Breast epithelium (tissue), 4 donors: ENCODE measurements at regions of chr18 and their contacts with region 1.

Region 1: DNA sequence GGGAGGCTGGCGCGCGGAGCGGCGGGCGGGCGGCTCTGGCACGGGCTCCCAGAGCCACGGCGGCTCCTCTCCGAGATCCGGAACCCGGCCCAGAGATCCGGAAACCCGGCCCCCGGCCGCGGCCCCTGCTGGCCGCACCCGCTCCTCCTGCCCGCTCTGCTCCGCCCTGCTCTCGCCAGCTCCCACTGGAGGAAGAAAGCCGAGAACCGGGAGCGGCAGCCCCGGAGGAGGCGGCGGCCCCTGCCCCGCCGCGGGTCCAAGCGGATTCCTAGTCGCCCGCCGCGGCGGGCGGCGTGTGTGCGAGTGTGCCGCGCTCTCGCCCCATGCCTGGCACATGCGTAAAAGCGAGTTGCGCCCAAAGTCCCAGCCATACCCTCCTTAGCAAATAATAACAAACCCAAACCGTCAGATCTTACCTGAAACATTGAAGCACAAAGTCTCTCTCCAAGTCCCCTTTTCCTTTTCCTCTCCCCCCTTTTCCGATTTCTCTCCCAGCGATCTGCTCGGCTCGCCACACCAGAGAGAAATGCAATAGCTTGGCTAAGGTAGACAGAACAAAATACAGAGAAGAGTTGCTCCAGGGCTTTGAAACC is 108.7 kb upstream of the KCTD1 start:
- DNase-seq: peak; percentile 66 to 75
- H3K4me3 ChIP-seq: peak overlapping the region; percentile 71 to 88 (median 78)
- H3K27ac ChIP-seq: peak overlapping the region; percentile 92 to 94
- H3K4me1 ChIP-seq: no peaks in the 10 kb centered on the region
- H3K27me3 ChIP-seq: no peaks in the 10 kb centered on the region
- CTCF ChIP-seq: peak in 2 of 3 donors; percentile 24 to 36
- POLR2A ChIP-seq: peak; percentile 44

Region 2: GRCh38 chr18:25233528-25234321 is 1423.3 kb before region 1 on chr18:
- intact Hi-C with region 1: no loop called
- DNase-seq: no peak
- H3K4me3 ChIP-seq: peak overlapping the region; percentile 12 to 17 (median 15)
- H3K27ac ChIP-seq: peak overlapping the region; percentile 16 to 62
- H3K4me1 ChIP-seq: peaks cover 4 to 20% of the 10 kb centered on the region in 2 donors
- H3K27me3 ChIP-seq: no peaks in the 10 kb centered on the region
- CTCF ChIP-seq: no peak
- POLR2A ChIP-seq: no peak

Region 3: GRCh38 chr18:26057344-26057773 is 599.7 kb before region 1 on chr18:
- intact Hi-C with region 1: no loop called
- DNase-seq: no peak
- H3K4me3 ChIP-seq: no peak overlapping the region
- H3K27ac ChIP-seq: no peak overlapping the region
- H3K4me1 ChIP-seq: no peaks in the 10 kb centered on the region
- H3K27me3 ChIP-seq: no peaks in the 10 kb centered on the region
- CTCF ChIP-seq: no peak
- POLR2A ChIP-seq: no peak

Region 4: GRCh38 chr18:27223570-27224291 is 566.7 kb after region 1 on chr18:
- intact Hi-C with region 1: no loop called
- DNase-seq: peak in 1 of 2 donors; percentile 38
- H3K4me3 ChIP-seq: peak overlapping the region in 1 of 3 donors; percentile 15
- H3K27ac ChIP-seq: peak overlapping the region; percentile 55 to 62
- H3K4me1 ChIP-seq: no peaks in the 10 kb centered on the region
- H3K27me3 ChIP-seq: no peaks in the 10 kb centered on the region
- CTCF ChIP-seq: no peak
- POLR2A ChIP-seq: no peak

Region 5: DNA sequence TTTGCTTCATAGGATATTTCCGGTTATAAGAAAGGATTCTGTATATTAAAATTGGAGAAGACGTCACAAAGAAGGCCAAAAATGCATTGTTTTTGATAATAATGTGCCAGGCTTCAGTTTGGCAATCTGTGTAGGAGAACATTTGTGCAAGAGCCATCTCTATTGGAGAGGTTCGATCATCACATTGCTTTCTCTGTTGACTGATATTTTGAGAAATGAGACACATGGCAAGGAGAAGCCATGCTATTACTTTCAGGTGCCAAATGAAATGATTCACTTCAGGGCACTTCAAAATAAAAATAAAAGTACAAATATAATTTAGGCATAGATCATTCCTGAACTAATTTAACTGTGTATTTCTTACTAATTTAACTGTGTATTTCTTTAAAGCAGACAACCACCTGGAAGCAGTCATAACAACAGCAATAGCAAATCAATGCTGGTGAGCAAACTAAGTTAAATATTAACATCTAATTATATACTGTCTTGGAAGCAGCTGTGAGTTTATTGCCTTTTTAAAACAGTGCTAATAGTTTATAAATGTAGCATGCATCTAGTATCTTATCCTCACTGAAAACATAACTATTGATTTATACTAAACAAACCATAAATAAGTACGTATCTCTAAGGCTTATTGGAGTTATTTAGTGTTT is 578.3 kb after region 1 on chr18:
- intact Hi-C with region 1: loop called (anchors 10 kb)
- DNase-seq: no peak
- H3K4me3 ChIP-seq: no peak overlapping the region
- H3K27ac ChIP-seq: no peak overlapping the region
- H3K4me1 ChIP-seq: no peaks in the 10 kb centered on the region
- H3K27me3 ChIP-seq: no peaks in the 10 kb centered on the region
- CTCF ChIP-seq: no peak
- POLR2A ChIP-seq: no peak

Region 6: DNA sequence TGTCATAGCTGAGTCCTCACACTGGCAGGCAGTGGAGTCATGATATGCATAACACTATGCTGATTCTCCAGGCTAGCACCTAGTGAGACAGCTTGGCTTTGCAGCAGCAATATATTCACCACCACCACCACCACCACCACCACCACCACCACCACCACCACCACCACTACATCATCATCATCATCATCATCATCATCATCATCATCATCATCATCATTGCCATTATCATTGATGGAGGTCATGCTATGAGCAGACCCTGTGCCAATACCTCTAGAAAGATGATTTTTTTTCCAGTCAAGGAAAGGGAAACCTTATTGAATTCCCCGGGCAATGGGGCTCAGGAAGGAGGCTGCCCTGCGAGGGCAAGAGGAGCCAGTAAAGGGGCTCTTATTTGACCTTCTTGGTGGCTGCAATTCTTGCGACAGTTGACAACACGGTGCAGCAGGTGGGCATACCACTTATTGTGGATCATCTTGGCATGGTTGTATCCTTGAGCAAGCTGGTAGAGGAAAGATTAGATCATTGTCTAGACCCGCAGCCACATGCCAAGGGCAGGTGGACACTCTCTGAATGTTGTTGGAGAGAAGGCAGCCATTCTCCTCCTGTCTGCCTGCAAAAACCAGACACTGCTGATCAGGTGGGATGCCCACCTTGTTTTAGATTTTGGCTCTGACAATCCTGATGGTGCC is 698.1 kb after region 1 on chr18:
- intact Hi-C with region 1: no loop called
- DNase-seq: no peak
- H3K4me3 ChIP-seq: no peak overlapping the region
- H3K27ac ChIP-seq: no peak overlapping the region
- H3K4me1 ChIP-seq: no peaks in the 10 kb centered on the region
- H3K27me3 ChIP-seq: no peaks in the 10 kb centered on the region
- CTCF ChIP-seq: no peak
- POLR2A ChIP-seq: no peak